ENCODE measurements at regions of chr10 and their contacts with region 1.

Region 1: GRCh38 chr10:33139181-33139646 is 181.2 kb upstream of the ITGB1 start:
- DNase-seq: peak; percentile 85
- ATAC-seq: peak; percentile 83
- H3K4me3 Mint-ChIP-seq: peak overlapping the region; percentile 36
- H3K27ac Mint-ChIP-seq: peak overlapping the region; percentile 93
- H3K4me1 Mint-ChIP-seq: peaks cover 74% of the 10 kb centered on the region
- H3K27me3 Mint-ChIP-seq: no peaks in the 10 kb centered on the region

Region 2: GRCh38 chr10:33125522-33126517 is 13.4 kb before region 1 on chr10:
- CTCF ChIA-PET with region 1: interaction called, 5 read pairs
- POLR2A ChIA-PET with region 1: interaction called, 12 read pairs
- DNase-seq: peak; percentile 63
- ATAC-seq: peak; percentile 95
- H3K4me3 Mint-ChIP-seq: no peak overlapping the region
- H3K27ac Mint-ChIP-seq: peak overlapping the region; percentile 94
- H3K4me1 Mint-ChIP-seq: peaks cover 44% of the 10 kb centered on the region
- H3K27me3 Mint-ChIP-seq: no peaks in the 10 kb centered on the region

Region 3: DNA sequence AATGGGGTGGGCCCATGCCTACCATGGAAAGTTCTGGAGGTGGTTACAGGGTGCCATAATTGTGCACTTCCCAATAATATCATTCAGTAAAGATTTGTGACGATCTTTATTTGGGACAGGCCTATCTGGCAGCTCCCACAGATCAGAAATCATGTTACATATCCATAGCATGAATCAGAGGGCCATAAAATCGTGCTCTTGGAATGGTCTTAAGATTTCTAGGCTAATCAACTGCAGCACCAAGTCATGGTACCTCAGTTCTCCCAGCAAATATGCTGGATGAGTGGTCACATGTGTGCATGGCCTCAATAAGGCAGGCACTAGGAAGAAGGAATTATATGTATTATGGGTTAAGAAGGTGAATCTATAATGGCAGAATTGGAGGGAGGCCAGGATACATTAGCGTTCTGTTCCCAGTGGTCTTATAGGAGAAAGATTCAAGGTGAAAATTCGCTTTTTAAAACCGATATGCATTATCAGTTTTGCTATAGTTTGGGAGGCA is 60.6 kb after region 1 on chr10:
- CTCF ChIA-PET with region 1: no interaction called
- POLR2A ChIA-PET with region 1: no interaction called
- DNase-seq: no peak
- ATAC-seq: no peak
- H3K4me3 Mint-ChIP-seq: no peak overlapping the region
- H3K27ac Mint-ChIP-seq: no peak overlapping the region
- H3K4me1 Mint-ChIP-seq: no peaks in the 10 kb centered on the region
- H3K27me3 Mint-ChIP-seq: peaks cover 5% of the 10 kb centered on the region

Measured in activated CD8-positive, alpha-beta T cell treated with anti-CD3 and anti-CD28 coated beads, Interleukin-2, amount 10 ng/mL, durations not matched to agents 7 days and 5 days (primary cell).